CD4-positive, alpha-beta T cell (primary cell): ENCODE measurements at regions of chr19 and their contacts with region 1.

Region 1: DNA sequence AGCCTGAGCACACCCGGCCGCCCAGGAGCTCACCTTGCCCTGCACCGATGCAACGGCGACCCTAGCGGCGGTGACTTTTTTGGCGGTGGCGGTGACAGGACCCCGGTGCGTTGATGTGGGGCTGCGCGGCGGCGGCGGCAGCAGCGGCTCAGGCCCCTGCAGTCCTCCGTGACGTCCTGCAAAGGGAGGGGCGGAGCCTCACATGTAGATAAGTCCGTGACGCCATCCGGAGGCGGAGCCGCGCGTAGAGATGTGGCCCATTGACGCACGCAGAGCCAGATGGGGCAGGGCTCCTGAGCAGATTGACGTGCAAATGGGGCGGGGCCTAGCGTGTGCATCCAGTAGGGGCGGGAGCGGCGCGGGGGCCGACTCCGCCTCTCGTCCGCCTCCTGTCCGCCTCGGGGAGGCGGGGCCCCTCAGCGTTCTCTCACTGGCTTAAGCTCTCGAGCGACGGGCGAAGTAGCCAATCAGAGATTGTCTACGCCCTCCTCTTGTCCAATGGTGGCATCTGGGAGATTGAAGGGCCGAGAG is at the start of gene RAB3A:
- DNase-seq: peak; percentile 98 to 100 (median 99)
- ATAC-seq: peak; percentile 87
- H3K4me3 ChIP-seq: peak within 1 kb of the TSS; percentile 89
- H3K4me3 Mint-ChIP-seq: peak within 1 kb of the TSS; percentile 96
- H3K27ac ChIP-seq: peak within 1 kb of the TSS; percentile 8 to 56
- H3K27ac Mint-ChIP-seq: peak within 1 kb of the TSS; percentile 91
- H3K4me1 ChIP-seq: peaks cover 33% of the 10 kb centered on the region
- H3K4me1 Mint-ChIP-seq: peaks cover 22% of the 10 kb centered on the region
- H3K27me3 ChIP-seq: no peaks in the 10 kb centered on the region
- H3K27me3 Mint-ChIP-seq: peaks cover 6% of the 10 kb centered on the region
- CTCF ChIP-seq: no peak
- total RNA-seq, gene RAB3A: 28.9 to 31.2 TPM

Region 2: DNA sequence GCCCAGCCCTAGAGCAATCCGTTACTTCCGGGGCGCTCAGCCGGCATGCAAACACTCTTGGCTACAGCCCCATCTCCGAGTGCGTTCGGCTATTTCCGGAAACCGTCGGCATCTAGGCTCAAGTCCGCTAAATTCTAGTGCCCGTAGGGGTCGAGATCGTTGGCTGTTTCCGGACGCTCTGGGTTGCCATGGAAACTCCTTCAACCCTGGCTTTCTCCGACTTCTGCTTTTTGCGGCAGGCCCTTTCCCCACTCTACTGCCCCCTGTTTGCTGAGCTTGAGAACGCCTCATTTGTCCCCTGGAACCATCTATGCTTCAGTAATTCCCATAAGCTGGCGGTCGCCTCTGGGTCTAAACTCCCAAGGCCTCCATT is 51.5 kb before region 1 on chr19:
- CTCF ChIA-PET with region 1: no interaction called
- POLR2A ChIA-PET with region 1: interaction called, 13 read pairs
- intact Hi-C with region 1: no loop called
- DNase-seq: peak; percentile 94 to 99 (median 98)
- ATAC-seq: peak; percentile 67
- H3K4me3 ChIP-seq: peak overlapping the region; percentile 78
- H3K4me3 Mint-ChIP-seq: peak overlapping the region; percentile 86
- H3K27ac ChIP-seq: peak overlapping the region; percentile 64 to 88
- H3K27ac Mint-ChIP-seq: peak overlapping the region; percentile 80
- H3K4me1 ChIP-seq: peaks cover 36% of the 10 kb centered on the region
- H3K4me1 Mint-ChIP-seq: peaks cover 23% of the 10 kb centered on the region
- H3K27me3 ChIP-seq: no peaks in the 10 kb centered on the region
- H3K27me3 Mint-ChIP-seq: no peaks in the 10 kb centered on the region
- CTCF ChIP-seq: peak; percentile 58

Region 3: DNA sequence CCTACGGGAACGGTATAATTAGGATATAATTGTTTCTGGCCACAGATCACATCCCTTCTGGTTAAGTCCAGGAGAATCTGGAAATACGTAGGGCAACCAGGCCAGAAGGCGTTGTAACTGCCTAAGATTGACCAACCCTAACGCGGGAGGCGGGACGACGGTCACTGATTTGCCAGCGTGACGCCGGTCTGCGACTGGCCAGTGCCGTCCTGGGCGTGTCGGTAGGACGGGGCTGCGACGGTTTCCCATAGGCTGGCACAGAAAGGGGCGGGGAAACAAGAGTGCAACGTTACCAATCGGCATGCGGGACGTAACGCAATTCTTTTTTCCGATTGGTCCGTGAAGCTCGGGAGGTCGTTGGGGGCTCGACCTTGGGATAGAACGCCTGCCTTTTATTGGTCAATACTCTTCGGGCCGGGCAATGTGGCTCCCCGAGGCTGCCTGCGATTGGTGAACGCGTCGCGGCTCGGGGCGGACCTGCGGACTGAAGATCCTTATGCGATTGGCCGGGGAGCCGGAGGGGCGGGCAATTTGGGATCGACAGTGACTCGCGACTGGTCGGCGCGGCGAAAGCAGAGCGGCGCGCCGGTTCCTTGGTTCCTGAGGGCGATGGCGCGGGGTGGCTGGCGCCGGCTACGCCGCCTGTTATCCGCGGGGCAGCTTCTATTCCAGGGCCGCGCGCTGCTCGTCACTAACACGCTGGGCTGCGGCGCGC is 11.1 kb before region 1 on chr19 and contains the start of gene MPV17L2:
- CTCF ChIA-PET with region 1: interaction called, 21 read pairs
- POLR2A ChIA-PET with region 1: interaction called, 63 read pairs
- intact Hi-C with region 1: loop called (anchors 1 kb)
- DNase-seq: peak; percentile 94 to 100 (median 98)
- ATAC-seq: peak; percentile 87
- H3K4me3 ChIP-seq: peak within 1 kb of the TSS; percentile 92
- H3K4me3 Mint-ChIP-seq: peak within 1 kb of the TSS; percentile 90
- H3K27ac ChIP-seq: peak within 1 kb of the TSS; percentile 73 to 82
- H3K27ac Mint-ChIP-seq: peak within 1 kb of the TSS; percentile 81
- H3K4me1 ChIP-seq: peaks cover 30% of the 10 kb centered on the region
- H3K4me1 Mint-ChIP-seq: peaks cover 29% of the 10 kb centered on the region
- H3K27me3 ChIP-seq: no peaks in the 10 kb centered on the region
- H3K27me3 Mint-ChIP-seq: no peaks in the 10 kb centered on the region
- CTCF ChIP-seq: no peak
- total RNA-seq, gene MPV17L2: 2.8 to 3.9 TPM

Region 4: DNA sequence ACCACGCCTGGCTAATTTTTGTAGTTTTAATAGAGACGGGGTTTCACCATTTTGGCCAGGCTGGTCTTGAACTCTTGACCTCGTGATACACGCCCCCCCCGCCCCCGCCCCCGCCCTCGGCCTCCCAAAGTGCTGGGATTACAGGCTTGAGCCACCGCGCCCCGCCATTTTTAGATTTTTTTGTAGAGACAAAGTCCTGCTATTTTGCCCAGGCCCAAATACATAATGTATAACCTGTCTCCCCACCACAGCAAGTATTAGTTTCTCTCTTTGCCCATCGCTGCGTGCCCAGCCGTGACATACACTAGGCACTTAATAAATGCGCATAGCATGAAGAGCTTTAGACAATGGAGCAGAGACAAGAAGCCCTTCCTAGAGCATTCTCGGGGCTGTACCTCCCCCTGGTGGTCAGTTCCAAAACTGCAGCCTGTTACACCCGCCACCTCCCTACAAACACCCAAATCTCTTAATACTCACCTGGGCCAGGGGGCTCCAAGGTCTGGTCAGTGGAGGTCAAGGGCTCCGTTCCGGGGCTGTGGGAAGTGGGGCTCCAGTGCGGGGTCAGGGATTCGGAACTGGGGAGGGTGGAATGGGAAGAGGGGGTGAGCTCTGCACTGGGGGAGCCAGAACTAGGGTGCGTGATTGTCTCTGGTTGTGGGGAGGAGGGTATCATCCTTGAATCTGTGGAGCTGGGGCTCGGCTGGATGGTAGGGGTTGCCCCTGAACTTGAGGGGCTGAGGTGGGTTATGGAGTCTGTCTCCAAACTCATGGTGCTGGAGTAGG is 47.9 kb after region 1 on chr19:
- CTCF ChIA-PET with region 1: interaction called, 19 read pairs
- POLR2A ChIA-PET with region 1: interaction called, 3 read pairs
- intact Hi-C with region 1: loop called (anchors 1 kb)
- DNase-seq: peak; percentile 65 to 90 (median 81)
- ATAC-seq: peak; percentile 91
- H3K4me3 ChIP-seq: no peak overlapping the region
- H3K4me3 Mint-ChIP-seq: no peak overlapping the region
- H3K27ac ChIP-seq: no peak overlapping the region
- H3K27ac Mint-ChIP-seq: no peak overlapping the region
- H3K4me1 ChIP-seq: peaks cover 8% of the 10 kb centered on the region
- H3K4me1 Mint-ChIP-seq: no peaks in the 10 kb centered on the region
- H3K27me3 ChIP-seq: peaks cover 8 to 12% of the 10 kb centered on the region in 2 experiments
- H3K27me3 Mint-ChIP-seq: peaks cover 31% of the 10 kb centered on the region
- CTCF ChIP-seq: peak; percentile 80

Region 5: DNA sequence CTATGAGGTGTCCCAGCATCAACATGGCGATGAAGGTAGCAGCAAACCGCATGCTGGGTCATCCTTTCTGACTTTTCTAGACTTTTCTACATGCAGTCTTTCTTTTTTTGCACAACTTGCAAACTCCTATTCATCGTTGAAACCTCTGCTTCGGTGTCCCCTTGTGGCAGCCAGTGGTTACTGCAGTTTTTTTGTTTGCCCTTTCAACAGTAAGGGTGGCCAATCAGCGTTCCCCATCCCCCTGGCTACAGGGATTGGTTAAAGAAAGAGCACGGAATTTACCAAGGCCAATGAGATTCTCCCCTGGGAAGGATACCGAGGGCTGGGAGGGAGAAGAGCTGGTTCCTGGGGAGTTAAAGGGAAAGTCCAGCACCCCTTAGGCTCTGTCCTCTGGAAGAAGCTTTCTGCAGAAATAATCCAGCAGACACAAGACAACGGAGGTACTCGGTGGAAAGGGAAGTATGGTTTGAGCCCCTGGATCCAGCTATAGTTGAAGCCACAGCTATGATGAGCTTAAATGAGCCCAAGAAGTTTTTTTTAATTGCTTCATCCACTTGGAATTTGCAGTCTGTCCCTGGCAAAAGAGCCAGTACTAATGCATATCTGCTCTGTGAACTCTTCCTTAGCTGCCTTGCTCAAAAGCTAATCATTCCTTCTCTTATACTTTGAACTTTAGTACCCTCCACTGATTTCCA is 124.6 kb after region 1 on chr19:
- CTCF ChIA-PET with region 1: interaction called, 6 read pairs
- POLR2A ChIA-PET with region 1: interaction called, 4 read pairs
- intact Hi-C with region 1: loop called (anchors 2 to 5 kb)
- DNase-seq: peak; percentile 76 to 94 (median 82)
- ATAC-seq: peak; percentile 99
- H3K4me3 ChIP-seq: peak overlapping the region; percentile 31
- H3K4me3 Mint-ChIP-seq: peak overlapping the region; percentile 47
- H3K27ac ChIP-seq: no peak overlapping the region
- H3K27ac Mint-ChIP-seq: peak overlapping the region; percentile 6
- H3K4me1 ChIP-seq: peaks cover 24% of the 10 kb centered on the region
- H3K4me1 Mint-ChIP-seq: peaks cover 17% of the 10 kb centered on the region
- H3K27me3 ChIP-seq: no peaks in the 10 kb centered on the region
- H3K27me3 Mint-ChIP-seq: no peaks in the 10 kb centered on the region
- CTCF ChIP-seq: peak; percentile 92

Region 6: GRCh38 chr19:18408053-18408476 is 204.1 kb after region 1 on chr19:
- CTCF ChIA-PET with region 1: interaction called, 4 read pairs
- POLR2A ChIA-PET with region 1: no interaction called
- intact Hi-C with region 1: loop called (anchors 1 kb)
- DNase-seq: peak in 2 of 14 experiments; percentile 43 to 51
- ATAC-seq: no peak
- H3K4me3 ChIP-seq: no peak overlapping the region
- H3K4me3 Mint-ChIP-seq: no peak overlapping the region
- H3K27ac ChIP-seq: no peak overlapping the region
- H3K27ac Mint-ChIP-seq: no peak overlapping the region
- H3K4me1 ChIP-seq: peaks cover 6% of the 10 kb centered on the region
- H3K4me1 Mint-ChIP-seq: peaks cover 5% of the 10 kb centered on the region
- H3K27me3 ChIP-seq: no peaks in the 10 kb centered on the region
- H3K27me3 Mint-ChIP-seq: peaks cover 10% of the 10 kb centered on the region
- CTCF ChIP-seq: peak; percentile 26

Region 7: DNA sequence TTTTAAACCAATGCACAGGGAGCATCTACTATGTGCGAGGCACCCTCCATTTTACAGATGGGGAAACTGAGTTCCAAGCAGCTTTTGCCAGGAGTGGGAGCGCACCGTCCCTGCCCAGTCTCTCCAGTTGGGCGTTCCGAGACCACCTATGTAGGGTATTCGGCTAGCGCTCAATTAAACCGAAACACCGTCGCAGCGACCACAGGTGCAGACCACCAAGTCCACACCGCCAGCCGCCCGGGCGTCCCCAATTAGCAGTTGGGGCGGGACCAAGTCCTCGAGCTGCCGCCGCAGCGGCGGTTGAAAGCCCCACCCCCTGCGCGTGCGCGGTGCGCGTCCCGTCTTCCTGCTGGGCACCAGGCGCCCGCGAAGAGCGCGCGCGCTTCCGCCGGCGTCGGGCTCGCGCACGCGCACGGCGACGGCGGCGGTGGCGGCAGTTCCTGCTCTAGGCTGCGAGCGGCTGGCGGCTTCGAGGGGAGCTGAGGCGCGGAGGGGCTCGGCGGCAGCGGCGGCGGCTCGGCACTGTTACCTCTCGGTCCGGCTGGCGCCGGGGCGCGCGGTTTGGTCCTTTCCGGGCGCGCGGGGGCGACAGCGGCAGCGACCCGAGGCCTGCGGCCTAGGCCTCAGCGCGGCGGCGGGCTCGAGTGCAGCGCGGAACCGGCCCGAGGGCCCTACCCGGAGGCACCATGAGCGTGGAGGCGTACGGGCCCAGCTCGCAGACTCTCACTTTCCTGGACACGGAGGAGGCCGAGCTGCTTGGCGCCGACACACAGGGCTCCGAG is 627.8 kb after region 1 on chr19 and contains the start of gene UPF1:
- CTCF ChIA-PET with region 1: no interaction called
- POLR2A ChIA-PET with region 1: no interaction called
- intact Hi-C with region 1: loop called in 1 of 2 experiments (anchors 5 kb)
- DNase-seq: peak; percentile 90 to 99 (median 96)
- ATAC-seq: peak; percentile 75
- H3K4me3 ChIP-seq: peak within 1 kb of the TSS; percentile 64
- H3K4me3 Mint-ChIP-seq: peak within 1 kb of the TSS; percentile 89
- H3K27ac ChIP-seq: peak within 1 kb of the TSS; percentile 64 to 81
- H3K27ac Mint-ChIP-seq: peak within 1 kb of the TSS; percentile 88
- H3K4me1 ChIP-seq: peaks cover 45% of the 10 kb centered on the region
- H3K4me1 Mint-ChIP-seq: peaks cover 39% of the 10 kb centered on the region
- H3K27me3 ChIP-seq: no peaks in the 10 kb centered on the region
- H3K27me3 Mint-ChIP-seq: no peaks in the 10 kb centered on the region
- CTCF ChIP-seq: no peak
- total RNA-seq, gene UPF1: 146 to 150 TPM